Dendritic cell treated with granulocyte-macrophage colony-stimulating factor and Interleukin-4, amounts not matched to agents 40 ng/mL and 50 ng/mL, for 4 days (primary cell): ENCODE measurements at regions of chr1 and their contacts with region 1.

Region 1: GRCh38 chr1:145963995-145964901 is at the starts of genes ANKRD34A and POLR3GL:
- H3K4me3 Mint-ChIP-seq: peak within 1 kb of the TSS; percentile 85
- H3K27ac Mint-ChIP-seq: peak within 1 kb of the TSS; percentile 94
- H3K4me1 Mint-ChIP-seq: peaks cover 58% of the 10 kb centered on the region
- H3K27me3 Mint-ChIP-seq: peaks cover 29% of the 10 kb centered on the region

Region 2: DNA sequence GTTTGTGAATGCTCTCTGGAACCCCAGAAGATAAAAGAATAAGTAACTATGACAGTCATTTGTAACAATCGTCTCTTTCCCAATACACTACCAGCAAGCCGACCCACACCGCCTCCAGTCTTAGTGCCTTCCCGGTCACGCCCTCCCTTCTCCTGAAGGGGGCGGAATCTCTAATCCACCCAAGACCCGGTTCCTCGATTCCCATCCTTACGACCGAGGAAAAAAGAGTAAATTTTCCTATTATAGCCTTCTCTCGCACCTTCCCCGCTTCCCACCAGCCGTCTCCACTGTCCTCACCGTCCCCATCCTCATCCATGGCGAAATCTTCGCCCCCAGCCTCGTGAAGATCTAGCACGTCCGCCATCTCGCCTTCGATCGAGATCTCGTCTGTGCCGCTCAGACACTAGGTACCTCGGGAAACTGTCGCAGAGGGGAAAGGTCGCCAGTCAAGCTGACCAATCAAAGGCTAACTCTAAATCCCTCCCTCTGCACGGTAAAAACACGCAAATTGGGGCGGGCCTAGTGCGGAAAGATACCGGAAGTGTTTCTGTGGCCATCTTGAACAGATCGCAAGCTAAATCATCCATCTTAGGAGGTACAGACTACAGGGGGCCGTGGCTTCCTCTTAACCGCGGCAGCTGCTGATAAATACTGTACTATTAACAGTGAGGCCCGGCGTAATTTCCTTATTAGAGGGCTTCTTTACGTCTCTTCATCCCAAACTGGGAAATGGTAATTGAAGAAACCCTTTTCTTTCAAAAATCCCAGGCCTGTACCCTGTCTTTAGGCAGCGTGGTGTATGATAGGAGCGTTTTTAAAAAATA is 37.0 kb before region 1 on chr1 and contains the start of gene RBM8A:
- intact Hi-C with region 1: loop called (anchors 2 kb)
- H3K4me3 Mint-ChIP-seq: peak within 1 kb of the TSS; percentile 40
- H3K27ac Mint-ChIP-seq: no peak within 1 kb of the TSS
- H3K4me1 Mint-ChIP-seq: peaks cover 9% of the 10 kb centered on the region
- H3K27me3 Mint-ChIP-seq: no peaks in the 10 kb centered on the region